A549 (cell line): ENCODE measurements at regions of chrX and their contacts with region 1.

Region 1: GRCh38 chrX:48631350-48632090 is 34.2 kb downstream of the WDR13 start:
- DNase-seq: peak; percentile 87 to 91
- ATAC-seq: peak; percentile 99 to 100
- H3K4me3 ChIP-seq: no peak overlapping the region
- H3K27ac ChIP-seq: peak overlapping the region; percentile 7 to 65; a peak in 3 of 6 replicates
- H3K4me1 ChIP-seq: peaks cover 12% of the 10 kb centered on the region; the same call in 2 of the 3 replicates
- CTCF ChIP-seq: peak; percentile 65
- EP300 ChIP-seq: no peak
- POLR2A ChIP-seq: no peak
- RAD21 ChIP-seq: peak; percentile 90 to 91

Region 2: DNA sequence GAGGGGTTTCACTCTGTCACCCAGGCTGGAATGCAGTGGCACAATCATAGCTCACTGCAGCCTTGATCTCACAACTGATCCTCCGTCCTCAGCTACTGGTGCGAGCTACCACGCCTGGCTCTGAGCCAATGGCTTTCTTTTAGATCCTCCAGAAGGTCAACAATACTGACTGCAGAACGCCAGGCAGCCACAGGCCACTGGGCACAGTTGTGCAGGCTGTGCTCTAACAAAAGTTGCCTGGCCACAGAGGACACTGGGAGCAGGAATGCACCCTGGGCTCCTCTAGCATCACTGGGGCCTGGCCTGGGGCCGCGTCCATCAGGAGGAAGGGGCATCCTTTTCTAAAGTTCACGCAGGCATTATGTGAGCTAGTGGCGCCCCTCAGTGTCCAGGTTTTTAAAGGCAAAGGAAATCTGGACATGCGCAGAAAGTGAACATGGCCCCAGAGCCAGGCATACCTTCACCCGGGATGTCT is 137.6 kb before region 1 on chrX:
- CTCF ChIA-PET with region 1: no interaction called
- POLR2A ChIA-PET with region 1: no interaction called
- DNase-seq: no peak
- ATAC-seq: peak in 1 of 2 experiments; percentile 43; a peak in 3 of 6 replicates
- H3K4me3 ChIP-seq: no peak overlapping the region
- H3K27ac ChIP-seq: no peak overlapping the region
- H3K4me1 ChIP-seq: peaks cover 21% of the 10 kb centered on the region
- CTCF ChIP-seq: no peak
- EP300 ChIP-seq: no peak
- POLR2A ChIP-seq: no peak
- RAD21 ChIP-seq: peak; percentile 45 to 66; a peak in 4 of 5 replicates

Region 3: GRCh38 chrX:48648336-48648751 is 16.8 kb after region 1 on chrX:
- CTCF ChIA-PET with region 1: interaction called, 11 read pairs
- POLR2A ChIA-PET with region 1: no interaction called
- DNase-seq: peak in 1 of 2 experiments; percentile 53
- ATAC-seq: peak; percentile 68 to 79; a peak in 4 of 6 replicates
- H3K4me3 ChIP-seq: no peak overlapping the region
- H3K27ac ChIP-seq: no peak overlapping the region
- H3K4me1 ChIP-seq: no peaks in the 10 kb centered on the region
- CTCF ChIP-seq: peak; percentile 48
- EP300 ChIP-seq: no peak
- POLR2A ChIP-seq: no peak
- RAD21 ChIP-seq: peak; percentile 66 to 72